ENCODE measurements at regions of chr1 and their contacts with region 1.

Region 1: GRCh38 chr1:110203021-110203661 is 7.0 kb upstream of the KCNC4 start:
- DNase-seq: peak; percentile 94
- ATAC-seq: peak; percentile 72
- H3K4me3 ChIP-seq: no peak overlapping the region
- H3K27ac ChIP-seq: peak overlapping the region; percentile 51
- H3K4me1 ChIP-seq: peaks cover 10% of the 10 kb centered on the region
- H3K27me3 ChIP-seq: no peaks in the 10 kb centered on the region
- CTCF ChIP-seq: peak; percentile 92

Region 2: GRCh38 chr1:110390692-110391245 is 187.6 kb after region 1 on chr1 and contains the start of gene SLC16A4:
- CTCF ChIA-PET with region 1: no interaction called
- POLR2A ChIA-PET with region 1: no interaction called
- intact Hi-C with region 1: no loop called
- DNase-seq: no peak
- ATAC-seq: no peak
- H3K4me3 ChIP-seq: no peak within 1 kb of the TSS
- H3K27ac ChIP-seq: no peak within 1 kb of the TSS
- H3K4me1 ChIP-seq: peaks cover 26% of the 10 kb centered on the region
- H3K27me3 ChIP-seq: no peaks in the 10 kb centered on the region
- CTCF ChIP-seq: no peak
- total RNA-seq, gene SLC16A4: 0.22 and 0.29 TPM in 2 replicates

Region 3: GRCh38 chr1:110412576-110412975 is 209.4 kb after region 1 on chr1:
- CTCF ChIA-PET with region 1: interaction called, 3 read pairs
- POLR2A ChIA-PET with region 1: no interaction called
- intact Hi-C with region 1: loop called (anchors 5 kb)
- DNase-seq: peak; percentile 78
- ATAC-seq: peak; percentile 83
- H3K4me3 ChIP-seq: no peak overlapping the region
- H3K27ac ChIP-seq: no peak overlapping the region
- H3K4me1 ChIP-seq: peaks cover 8% of the 10 kb centered on the region; the same call in 1 of the 2 replicates
- H3K27me3 ChIP-seq: no peaks in the 10 kb centered on the region
- CTCF ChIP-seq: peak; percentile 90

Region 4: DNA sequence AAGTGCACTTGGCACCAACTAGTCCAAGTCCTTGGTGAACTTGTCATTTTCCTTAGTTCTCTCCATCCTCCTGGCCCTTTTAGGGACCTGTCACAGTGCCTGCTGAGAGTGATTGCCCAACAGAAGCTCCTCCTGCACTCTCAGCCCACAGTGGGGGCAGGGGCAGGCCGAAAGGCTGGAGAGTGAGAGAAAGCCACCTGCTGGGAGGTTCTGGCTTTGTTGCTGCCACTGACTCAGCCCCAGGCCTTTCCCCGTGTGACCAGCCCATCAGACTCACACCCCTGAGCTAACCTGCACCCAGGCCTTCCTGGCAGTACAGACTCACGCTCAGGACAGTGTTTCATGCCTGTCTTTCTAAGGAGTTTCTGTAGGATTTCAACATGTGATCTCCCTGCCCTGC is 230.7 kb after region 1 on chr1:
- CTCF ChIA-PET with region 1: no interaction called
- POLR2A ChIA-PET with region 1: no interaction called
- intact Hi-C with region 1: no loop called
- DNase-seq: peak; percentile 75
- ATAC-seq: peak; percentile 96
- H3K4me3 ChIP-seq: no peak overlapping the region
- H3K27ac ChIP-seq: no peak overlapping the region
- H3K4me1 ChIP-seq: no peaks in the 10 kb centered on the region
- H3K27me3 ChIP-seq: peaks cover 32% of the 10 kb centered on the region
- CTCF ChIP-seq: peak; percentile 42

Measured in PC-3 (cell line).